ENCODE measurements at regions of chr4 and their contacts with region 1.

Region 1: DNA sequence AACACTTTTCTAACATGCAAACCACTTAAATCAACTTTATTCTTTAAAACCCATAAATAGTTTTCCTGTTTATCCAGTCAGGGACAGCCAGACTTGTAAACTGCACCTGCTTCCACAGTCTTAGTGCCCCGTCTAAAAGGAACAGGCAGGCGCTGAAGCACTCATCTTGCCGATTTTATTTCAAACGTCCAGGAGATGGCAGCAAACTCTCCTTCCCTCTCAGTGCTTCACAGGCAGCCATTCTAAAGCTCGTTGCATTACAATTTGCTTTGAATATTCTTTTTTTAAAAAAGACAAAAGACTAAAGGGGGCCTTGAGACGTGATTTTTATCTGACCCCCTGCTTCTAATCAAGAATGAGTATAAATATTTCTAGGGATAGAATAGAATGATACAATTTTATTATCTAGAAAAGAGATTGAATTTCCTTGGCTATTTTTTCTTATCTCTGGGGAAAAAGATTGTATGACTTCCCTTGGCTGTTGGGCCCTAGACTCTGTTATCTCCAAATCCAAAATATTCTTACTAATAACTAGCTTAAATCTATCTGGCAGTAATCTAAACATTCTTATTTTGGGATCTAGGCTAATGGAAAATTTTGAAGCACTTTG is 93.6 kb upstream of the MYOZ2 start:
- DNase-seq: no peak

Region 2: GRCh38 chr4:118746292-118746919 is 295.6 kb before region 1 on chr4:
- intact Hi-C with region 1: loop called (anchors 5 kb)
- DNase-seq: no peak

Region 3: DNA sequence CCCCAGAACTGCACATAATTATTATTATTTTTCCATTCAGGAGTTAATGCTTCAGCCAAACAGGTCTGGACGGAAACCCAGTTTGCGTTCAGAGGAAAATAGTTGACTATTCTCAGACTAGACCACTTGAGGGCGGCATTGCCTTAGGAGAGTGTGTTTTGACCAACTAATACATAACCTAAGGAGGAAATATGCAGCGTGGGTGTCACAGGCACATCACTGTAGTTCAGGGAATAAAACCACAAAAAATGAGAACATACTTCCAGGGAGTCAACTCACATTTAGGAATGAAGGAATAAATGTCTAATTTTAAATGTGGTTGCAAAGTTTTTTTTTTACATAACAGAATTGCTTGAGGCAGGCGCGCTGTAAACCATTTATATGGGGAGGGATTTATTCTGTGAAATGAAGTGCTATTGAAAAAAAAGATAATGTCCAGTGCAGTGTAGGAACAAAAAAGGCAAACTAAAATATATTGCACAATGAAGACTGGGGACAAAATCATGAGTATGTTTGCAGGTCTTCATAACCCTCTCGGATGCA is 60.1 kb before region 1 on chr4:
- intact Hi-C with region 1: loop called (anchors 2 kb)
- DNase-seq: no peak

Region 4: GRCh38 chr4:119130365-119131065 is 88.5 kb after region 1 on chr4:
- intact Hi-C with region 1: loop called (anchors 2 kb)
- DNase-seq: no peak

Region 5: DNA sequence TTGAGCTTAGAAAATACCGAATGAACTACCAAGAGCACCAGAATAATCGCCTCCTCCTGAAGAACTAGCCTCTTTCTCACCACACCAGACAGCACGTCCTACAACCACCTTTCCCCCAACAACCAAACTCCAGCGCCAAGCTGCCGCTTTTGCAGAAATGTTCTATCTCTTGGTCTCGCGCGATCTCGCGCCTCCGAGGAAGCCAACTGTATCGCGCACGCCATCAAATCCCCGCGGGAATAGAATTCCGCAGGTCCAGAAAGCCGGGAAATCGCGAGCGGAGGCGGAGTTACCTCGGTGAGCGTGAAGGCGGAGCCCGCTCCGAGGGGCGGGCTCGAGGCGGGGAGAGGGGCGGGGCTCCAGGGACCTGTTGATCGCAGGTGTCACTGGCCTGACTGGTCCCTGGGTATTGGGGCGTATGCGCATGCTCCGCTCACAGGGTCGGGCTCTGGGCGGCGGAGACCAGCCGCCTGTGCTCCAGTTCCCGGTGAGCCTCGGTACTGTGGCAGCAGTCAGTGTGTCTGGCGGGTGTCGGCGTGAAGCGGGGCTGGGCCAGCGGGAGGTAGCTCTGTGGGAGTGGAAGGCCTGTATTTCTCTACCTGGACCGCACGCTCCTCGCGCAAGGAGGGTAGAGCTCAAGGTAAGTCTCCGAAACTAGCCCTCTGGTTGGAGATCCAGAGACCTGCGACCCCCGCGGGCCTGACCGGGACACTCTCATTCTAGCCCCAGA is 170.3 kb after region 1 on chr4 and contains the start of gene USP53:
- intact Hi-C with region 1: loop called (anchors 2 kb)
- DNase-seq: peak; percentile 98
- total RNA-seq, gene USP53: 49.7 TPM

Measured in cardiac septum (tissue), 1 donor.